Breast epithelium (tissue), 4 donors: ENCODE measurements at regions of chr11 and their contacts with region 1.

Region 1: GRCh38 chr11:10701982-10702381 is 8.4 kb upstream of the IRAG1 start:
- DNase-seq: no peak
- H3K4me3 ChIP-seq: no peak overlapping the region
- H3K27ac ChIP-seq: no peak overlapping the region
- H3K4me1 ChIP-seq: no peaks in the 10 kb centered on the region
- H3K27me3 ChIP-seq: no peaks in the 10 kb centered on the region
- CTCF ChIP-seq: no peak
- POLR2A ChIP-seq: no peak

Region 2: DNA sequence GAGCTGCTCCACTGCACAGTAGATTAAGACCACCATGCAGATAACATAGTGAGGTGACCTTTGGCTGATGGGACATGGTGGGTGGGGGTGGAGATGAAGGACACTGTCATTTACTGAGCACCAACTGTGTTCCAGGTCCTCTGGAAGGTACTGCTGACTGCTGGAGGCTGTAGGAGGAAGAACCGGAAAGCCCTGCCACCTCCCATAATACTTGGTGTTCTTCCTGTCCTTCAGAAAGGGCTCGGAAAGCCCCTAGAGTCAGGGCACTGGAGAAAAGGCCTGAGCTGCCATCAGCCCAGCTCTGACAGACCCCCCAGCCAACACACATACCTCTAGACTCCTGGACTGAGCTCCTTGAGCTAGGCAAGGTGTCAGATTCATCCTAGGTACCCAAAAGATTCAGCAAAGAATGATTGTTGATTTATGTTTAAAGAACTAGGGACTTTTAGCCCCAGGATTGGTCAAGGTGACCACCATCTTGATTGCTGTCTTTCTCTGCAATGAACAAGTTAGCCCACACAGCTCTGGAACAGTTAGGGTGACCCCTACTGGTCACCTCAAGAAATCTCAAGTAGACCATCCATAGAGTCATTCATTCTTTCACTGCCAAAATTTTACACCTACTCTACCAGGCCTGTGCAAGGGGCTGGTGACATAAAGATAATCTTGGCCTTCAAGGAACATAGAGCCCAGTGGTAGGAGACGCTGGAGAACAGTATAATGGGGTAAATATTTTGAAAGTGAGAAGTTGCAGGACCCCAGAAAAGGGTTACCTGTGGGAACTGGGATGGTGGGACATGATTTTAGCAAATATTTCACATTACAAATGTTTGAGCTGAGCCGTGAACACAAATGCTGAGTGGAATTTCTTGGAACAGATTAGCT is 47.8 kb before region 1 on chr11:
- intact Hi-C with region 1: no loop called
- DNase-seq: no peak
- H3K4me3 ChIP-seq: no peak overlapping the region
- H3K27ac ChIP-seq: peak overlapping the region in 1 of 2 donors; percentile 62
- H3K4me1 ChIP-seq: peaks cover 0 to 2% of the 10 kb centered on the region in 2 donors
- H3K27me3 ChIP-seq: no peaks in the 10 kb centered on the region
- CTCF ChIP-seq: peak in 2 of 3 donors; percentile 39 to 56
- POLR2A ChIP-seq: no peak

Region 3: GRCh38 chr11:10664496-10664895 is 37.5 kb before region 1 on chr11:
- intact Hi-C with region 1: no loop called
- DNase-seq: no peak
- H3K4me3 ChIP-seq: no peak overlapping the region
- H3K27ac ChIP-seq: peak overlapping the region in 1 of 2 donors; percentile 32
- H3K4me1 ChIP-seq: peaks cover 0 to 3% of the 10 kb centered on the region in 2 donors
- H3K27me3 ChIP-seq: no peaks in the 10 kb centered on the region
- CTCF ChIP-seq: no peak
- POLR2A ChIP-seq: no peak

Region 4: DNA sequence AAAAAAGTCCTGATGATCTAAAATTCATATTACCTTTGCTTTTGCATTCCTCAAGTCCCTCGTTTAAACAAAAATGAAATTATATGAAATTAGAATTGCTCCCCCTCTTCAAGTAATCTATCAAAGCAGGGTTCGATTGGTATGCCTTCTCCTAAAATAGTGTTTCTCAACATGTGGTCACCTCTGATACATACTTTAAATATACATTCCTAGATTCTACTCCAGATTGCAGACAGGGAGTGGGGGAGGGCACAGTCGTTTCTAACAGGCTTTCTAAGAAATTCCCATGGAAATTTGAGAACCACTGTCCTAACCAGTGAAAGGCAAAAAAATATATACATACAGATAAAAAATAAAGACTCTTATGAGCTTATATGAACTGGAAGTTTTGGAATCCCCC is 14.1 kb after region 1 on chr11:
- intact Hi-C with region 1: loop called (anchors 2 kb)
- DNase-seq: no peak
- H3K4me3 ChIP-seq: no peak overlapping the region
- H3K27ac ChIP-seq: no peak overlapping the region
- H3K4me1 ChIP-seq: no peaks in the 10 kb centered on the region
- H3K27me3 ChIP-seq: no peaks in the 10 kb centered on the region
- CTCF ChIP-seq: no peak
- POLR2A ChIP-seq: no peak

Region 5: DNA sequence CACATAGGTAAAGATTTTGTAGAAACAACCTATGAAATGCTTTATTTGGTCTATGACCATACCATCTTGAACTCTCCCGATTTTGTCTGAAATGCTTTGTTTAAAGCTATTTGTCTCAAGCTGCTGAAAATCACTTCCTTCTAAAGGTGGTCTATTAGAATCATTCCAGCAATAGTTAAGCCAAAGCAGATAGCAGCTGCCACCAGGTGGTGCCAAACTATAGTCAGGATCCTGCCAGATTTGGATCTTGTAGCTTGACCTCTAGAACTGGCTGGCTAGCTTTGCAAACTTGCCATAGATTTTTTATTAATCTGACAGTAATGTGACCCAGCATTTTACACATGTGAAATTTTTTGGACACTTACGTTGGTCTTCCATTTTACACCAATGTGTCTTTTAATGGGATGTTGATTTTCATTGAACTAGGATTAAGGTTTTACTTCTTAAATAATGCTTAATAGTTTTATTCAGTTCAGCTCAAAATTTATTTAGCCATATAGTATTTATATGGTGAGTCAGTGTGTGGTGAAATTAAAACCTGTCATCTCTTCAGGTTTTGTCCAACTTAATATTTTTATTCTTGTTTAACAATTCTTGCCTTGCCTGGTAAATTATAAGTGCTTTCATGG is 68.8 kb after region 1 on chr11:
- intact Hi-C with region 1: no loop called
- DNase-seq: no peak
- H3K4me3 ChIP-seq: no peak overlapping the region
- H3K27ac ChIP-seq: no peak overlapping the region
- H3K4me1 ChIP-seq: no peaks in the 10 kb centered on the region
- H3K27me3 ChIP-seq: no peaks in the 10 kb centered on the region
- CTCF ChIP-seq: peak in 2 of 3 donors; percentile 27 to 49
- POLR2A ChIP-seq: no peak